SK-N-SH (cell line): ENCODE measurements at regions of chr11 and their contacts with region 1.

Region 1: GRCh38 chr11:16945671-16946469 is 68.3 kb downstream of the PLEKHA7 start:
- DNase-seq: peak; percentile 77
- H3K4me3 ChIP-seq: no peak overlapping the region
- H3K27ac ChIP-seq: no peak overlapping the region
- H3K4me1 ChIP-seq: no peaks in the 10 kb centered on the region
- H3K27me3 ChIP-seq: peaks cover 6% of the 10 kb centered on the region; the same call in 1 of the 2 replicates
- CTCF ChIP-seq: peak; percentile 52
- EP300 ChIP-seq: no peak
- RAD21 ChIP-seq: peak; percentile 97

Region 2: DNA sequence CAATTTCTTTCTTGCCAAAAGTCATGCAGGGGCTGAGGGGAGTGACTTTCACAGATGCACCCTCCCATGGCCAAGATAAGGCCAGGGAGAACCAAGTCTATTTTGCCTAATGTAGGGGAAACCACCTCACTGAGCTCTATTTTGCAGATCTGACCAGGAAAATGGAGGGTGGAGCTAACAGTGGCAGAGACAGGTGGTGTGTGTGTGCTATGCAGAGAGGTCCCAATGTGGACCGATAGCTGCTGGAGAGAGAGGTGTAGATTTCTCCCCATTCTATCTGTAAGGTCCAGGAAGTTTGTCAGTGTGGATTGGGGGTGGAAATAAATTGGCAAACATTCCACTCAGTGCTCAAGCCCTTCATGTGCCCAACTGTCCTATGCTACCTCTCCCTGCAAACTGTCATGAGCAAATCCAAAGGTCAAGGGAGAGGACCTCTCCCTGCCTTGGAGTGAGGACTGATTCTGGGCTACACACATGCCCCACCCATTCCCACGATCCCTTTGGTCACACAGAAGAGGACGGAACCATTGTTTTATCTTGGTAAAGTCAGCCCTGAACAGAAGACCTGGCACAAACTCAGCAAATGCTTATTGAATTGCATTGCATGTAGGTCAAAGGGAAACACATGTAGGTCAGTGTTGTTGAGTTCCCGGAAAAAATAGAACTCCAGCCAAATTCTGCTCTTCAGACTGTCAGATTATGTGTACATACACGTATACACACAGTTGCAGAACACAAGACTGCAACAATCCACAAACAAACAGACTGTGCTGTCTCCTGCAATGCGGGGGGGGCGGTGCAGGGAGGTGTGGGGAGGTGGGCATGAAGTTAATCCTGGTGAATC is 141.5 kb before region 1 on chr11:
- CTCF ChIA-PET with region 1: no interaction called
- POLR2A ChIA-PET with region 1: no interaction called
- DNase-seq: no peak
- H3K4me3 ChIP-seq: no peak overlapping the region
- H3K27ac ChIP-seq: no peak overlapping the region
- H3K4me1 ChIP-seq: peaks cover 0 to 20% of the 10 kb centered on the region in 2 experiments; a peak in 1 of 4 replicates
- H3K27me3 ChIP-seq: no peaks in the 10 kb centered on the region
- CTCF ChIP-seq: no peak
- EP300 ChIP-seq: 0 out of 4 replicates have a peak, but pooled peaks of 1 of the 2 experiments have one; percentile 13
- RAD21 ChIP-seq: no peak

Region 3: DNA sequence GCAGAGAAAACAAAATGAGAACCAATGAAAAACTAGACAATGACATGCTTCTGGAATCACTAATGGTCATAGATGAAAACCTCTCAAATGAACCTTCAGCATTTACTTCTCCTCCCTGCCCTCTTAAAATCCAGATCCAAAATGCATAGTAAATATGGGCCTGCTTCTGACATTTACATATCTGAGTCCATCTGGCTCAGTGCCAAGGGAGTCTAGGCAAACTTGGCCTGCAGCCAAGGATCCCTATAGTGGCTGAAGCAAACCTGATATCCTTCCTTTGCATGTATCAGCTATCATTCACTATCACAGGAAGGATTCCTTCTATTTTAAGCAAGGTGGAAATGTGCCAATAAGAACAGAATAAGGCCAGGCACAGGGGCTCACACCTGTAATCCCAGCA is 102.6 kb before region 1 on chr11:
- CTCF ChIA-PET with region 1: no interaction called
- POLR2A ChIA-PET with region 1: no interaction called
- DNase-seq: peak; percentile 44
- H3K4me3 ChIP-seq: no peak overlapping the region
- H3K27ac ChIP-seq: no peak overlapping the region
- H3K4me1 ChIP-seq: no peaks in the 10 kb centered on the region
- H3K27me3 ChIP-seq: no peaks in the 10 kb centered on the region
- CTCF ChIP-seq: no peak
- EP300 ChIP-seq: no peak
- RAD21 ChIP-seq: no peak

Region 4: GRCh38 chr11:16897470-16898061 is 48.3 kb before region 1 on chr11:
- CTCF ChIA-PET with region 1: no interaction called
- POLR2A ChIA-PET with region 1: no interaction called
- DNase-seq: no peak
- H3K4me3 ChIP-seq: no peak overlapping the region
- H3K27ac ChIP-seq: no peak overlapping the region
- H3K4me1 ChIP-seq: no peaks in the 10 kb centered on the region; a peak in 1 of 4 replicates
- H3K27me3 ChIP-seq: no peaks in the 10 kb centered on the region
- CTCF ChIP-seq: no peak
- EP300 ChIP-seq: no peak
- RAD21 ChIP-seq: no peak

Region 5: DNA sequence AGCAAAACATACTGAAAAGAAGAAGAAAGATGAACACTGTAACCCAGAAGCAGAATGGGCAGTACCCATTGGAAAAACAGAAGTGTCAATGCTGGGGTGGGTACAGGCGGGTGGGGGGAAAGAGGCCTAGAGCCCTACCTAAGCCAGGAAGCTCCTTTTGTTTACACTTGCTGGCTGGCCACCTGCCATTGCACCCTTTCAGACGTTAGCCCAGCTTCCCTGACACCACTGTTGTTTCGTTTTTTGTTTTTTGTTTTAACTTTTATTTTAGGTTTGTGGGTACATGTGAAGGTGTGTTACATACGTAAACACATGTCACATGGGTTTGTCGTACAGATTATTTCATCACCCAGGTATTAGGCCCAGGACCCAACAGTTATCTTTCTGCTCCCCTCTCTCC is 13.0 kb after region 1 on chr11:
- CTCF ChIA-PET with region 1: interaction called, 36 read pairs
- POLR2A ChIA-PET with region 1: no interaction called
- DNase-seq: no peak
- H3K4me3 ChIP-seq: no peak overlapping the region
- H3K27ac ChIP-seq: no peak overlapping the region
- H3K4me1 ChIP-seq: peaks cover 0 to 4% of the 10 kb centered on the region in 2 experiments; a peak in 1 of 4 replicates
- H3K27me3 ChIP-seq: no peaks in the 10 kb centered on the region
- CTCF ChIP-seq: no peak
- EP300 ChIP-seq: no peak
- RAD21 ChIP-seq: no peak

Region 6: DNA sequence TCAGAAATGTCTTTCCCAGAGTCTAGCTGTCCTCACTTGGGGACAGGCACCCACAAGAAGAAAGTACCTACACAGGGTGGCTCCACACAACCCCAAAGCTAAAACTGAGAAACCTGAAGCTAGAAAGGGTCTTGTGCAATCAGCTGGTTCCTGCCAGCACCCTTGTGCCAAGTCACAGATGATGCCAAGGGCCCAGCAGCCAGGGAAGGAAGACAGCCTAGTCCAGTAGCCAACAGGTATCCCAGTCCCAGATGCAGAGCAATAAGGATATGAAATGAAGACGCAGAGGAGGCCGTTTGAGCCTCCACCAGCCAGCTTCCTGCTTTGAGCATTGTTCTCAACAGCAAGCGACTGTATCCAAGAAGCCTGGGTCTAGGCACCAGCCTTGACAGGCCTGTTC is 62.2 kb after region 1 on chr11:
- CTCF ChIA-PET with region 1: interaction called, 14 read pairs
- POLR2A ChIA-PET with region 1: no interaction called
- DNase-seq: no peak
- H3K4me3 ChIP-seq: no peak overlapping the region
- H3K27ac ChIP-seq: no peak overlapping the region
- H3K4me1 ChIP-seq: no peaks in the 10 kb centered on the region
- H3K27me3 ChIP-seq: peaks cover 21% of the 10 kb centered on the region
- CTCF ChIP-seq: no peak
- EP300 ChIP-seq: no peak
- RAD21 ChIP-seq: no peak

Region 7: DNA sequence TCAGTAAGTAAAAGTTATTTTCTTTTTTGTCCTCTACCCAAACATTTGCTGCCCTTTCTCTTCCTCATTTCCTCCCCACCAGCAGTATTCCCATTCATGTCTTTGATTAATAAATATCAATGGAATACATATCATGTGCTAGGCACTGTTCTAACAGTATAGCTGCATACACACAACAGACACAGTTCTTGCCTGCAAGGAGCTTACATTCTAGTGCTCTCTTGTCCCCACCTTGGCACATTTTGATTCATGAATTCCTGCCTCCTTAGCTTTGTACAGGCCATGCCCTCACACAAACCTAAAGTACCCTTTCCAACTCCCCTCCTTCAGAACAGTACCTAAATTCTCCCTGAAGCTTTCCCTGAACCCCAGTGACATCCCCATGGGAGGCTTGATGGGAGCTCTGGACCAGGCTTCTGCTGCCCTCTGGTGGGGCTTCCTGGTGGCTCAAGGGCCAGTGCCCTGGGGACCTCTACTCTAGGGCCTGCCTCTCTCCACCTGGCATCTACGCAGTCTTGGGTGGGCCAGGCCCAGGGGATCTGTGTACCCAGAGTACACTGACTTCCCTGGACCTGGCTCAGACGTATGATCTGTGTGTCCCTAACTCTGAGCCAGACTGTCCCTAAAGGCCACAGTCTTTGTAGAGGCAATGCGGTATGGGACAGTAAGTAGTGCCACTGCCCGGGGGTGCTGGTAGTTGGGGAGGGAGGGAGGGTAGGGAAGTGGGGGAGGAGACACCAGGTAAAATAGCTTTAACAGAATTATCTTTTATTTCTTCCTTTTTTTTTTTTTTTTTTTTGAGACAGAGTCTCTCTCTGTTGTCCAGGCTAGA is 117.5 kb after region 1 on chr11:
- CTCF ChIA-PET with region 1: interaction called, 228 read pairs
- POLR2A ChIA-PET with region 1: interaction called, 3 read pairs
- DNase-seq: peak; percentile 79
- H3K4me3 ChIP-seq: no peak overlapping the region; a peak in 1 of 4 replicates
- H3K27ac ChIP-seq: no peak overlapping the region
- H3K4me1 ChIP-seq: no peaks in the 10 kb centered on the region
- H3K27me3 ChIP-seq: no peaks in the 10 kb centered on the region
- CTCF ChIP-seq: peak; percentile 75
- EP300 ChIP-seq: no peak
- RAD21 ChIP-seq: peak; percentile 89